ENCODE measurements at regions of chr6 and their contacts with region 1.

Region 1: DNA sequence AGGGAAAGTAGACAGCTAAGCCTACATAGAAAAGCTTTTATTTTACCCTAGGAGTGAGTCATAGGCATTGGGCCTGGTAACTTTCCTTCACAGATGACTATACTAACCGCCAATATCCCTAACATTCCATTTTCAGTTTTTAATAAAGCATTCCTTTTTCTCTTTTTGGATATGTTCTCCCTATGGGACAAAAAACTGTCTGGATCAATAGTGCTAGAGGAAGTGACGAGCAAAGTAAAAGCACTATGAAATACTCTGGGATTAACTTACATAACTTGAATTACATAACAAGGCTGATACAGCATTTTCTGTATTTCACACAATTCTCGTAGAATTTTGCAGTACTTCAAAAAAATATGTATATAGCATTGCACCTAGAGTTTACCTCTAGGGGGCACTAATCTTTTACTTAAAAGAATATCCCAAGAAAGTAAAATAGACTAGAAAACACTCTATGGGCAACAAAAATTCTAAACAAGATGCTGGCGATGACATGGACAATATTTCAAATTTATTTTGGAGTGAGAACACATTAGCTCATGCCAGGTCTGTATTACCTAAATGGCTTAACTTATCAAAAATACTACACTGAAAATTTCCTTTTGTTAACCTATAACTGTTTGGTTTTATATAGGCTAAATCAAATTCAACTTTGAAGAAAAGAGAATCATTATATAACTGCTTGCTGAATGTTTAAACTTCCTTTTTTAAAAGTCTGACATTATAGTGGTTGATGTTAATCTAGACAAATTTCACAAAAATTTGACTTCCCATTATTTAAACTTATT is 66.3 kb upstream of the DST start:
- DNase-seq: peak; percentile 59
- H3K4me3 Mint-ChIP-seq: peak overlapping the region; percentile 45
- H3K27ac Mint-ChIP-seq: peak overlapping the region; percentile 53
- H3K4me1 Mint-ChIP-seq: peaks cover 31% of the 10 kb centered on the region
- H3K27me3 Mint-ChIP-seq: no peaks in the 10 kb centered on the region
- CTCF ChIP-seq: peak; percentile 24

Region 2: GRCh38 chr6:56724455-56724854 is 15.5 kb after region 1 on chr6:
- CTCF ChIA-PET with region 1: interaction called, 14 read pairs
- POLR2A ChIA-PET with region 1: interaction called, 133 read pairs
- intact Hi-C with region 1: loop called (anchors 2 kb)
- DNase-seq: no peak
- H3K4me3 Mint-ChIP-seq: no peak overlapping the region
- H3K27ac Mint-ChIP-seq: no peak overlapping the region
- H3K4me1 Mint-ChIP-seq: peaks cover 41% of the 10 kb centered on the region
- H3K27me3 Mint-ChIP-seq: no peaks in the 10 kb centered on the region
- CTCF ChIP-seq: no peak

Region 3: DNA sequence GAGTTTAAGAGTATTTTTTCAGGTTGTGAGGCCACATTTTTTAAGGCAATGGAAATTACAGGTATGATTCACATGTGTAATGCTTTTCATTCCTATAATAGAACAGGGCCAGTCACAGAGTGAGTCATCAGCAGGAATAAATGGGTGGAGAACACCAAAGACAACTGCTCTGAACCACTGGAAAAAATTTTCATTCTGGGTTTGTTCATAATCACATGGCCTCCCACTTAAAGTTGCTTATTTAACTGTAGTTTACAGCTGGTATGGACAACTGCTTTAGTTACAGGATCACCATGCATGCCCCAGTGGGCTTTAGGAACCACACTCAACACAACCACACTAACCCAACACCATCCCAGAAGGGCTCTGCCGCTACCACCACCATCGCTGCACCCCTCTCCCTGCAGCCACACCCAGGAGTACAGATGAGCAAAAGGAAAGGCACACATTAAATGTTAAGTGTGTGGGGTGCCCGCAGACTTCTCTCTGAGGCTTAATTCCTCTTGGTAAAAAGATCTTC is 40.7 kb after region 1 on chr6:
- CTCF ChIA-PET with region 1: interaction called, 404 read pairs
- POLR2A ChIA-PET with region 1: interaction called, 192 read pairs
- intact Hi-C with region 1: no loop called
- DNase-seq: peak; percentile 88
- H3K4me3 Mint-ChIP-seq: peak overlapping the region; percentile 65
- H3K27ac Mint-ChIP-seq: peak overlapping the region; percentile 91
- H3K4me1 Mint-ChIP-seq: peaks cover 51% of the 10 kb centered on the region
- H3K27me3 Mint-ChIP-seq: no peaks in the 10 kb centered on the region
- CTCF ChIP-seq: no peak

Region 4: DNA sequence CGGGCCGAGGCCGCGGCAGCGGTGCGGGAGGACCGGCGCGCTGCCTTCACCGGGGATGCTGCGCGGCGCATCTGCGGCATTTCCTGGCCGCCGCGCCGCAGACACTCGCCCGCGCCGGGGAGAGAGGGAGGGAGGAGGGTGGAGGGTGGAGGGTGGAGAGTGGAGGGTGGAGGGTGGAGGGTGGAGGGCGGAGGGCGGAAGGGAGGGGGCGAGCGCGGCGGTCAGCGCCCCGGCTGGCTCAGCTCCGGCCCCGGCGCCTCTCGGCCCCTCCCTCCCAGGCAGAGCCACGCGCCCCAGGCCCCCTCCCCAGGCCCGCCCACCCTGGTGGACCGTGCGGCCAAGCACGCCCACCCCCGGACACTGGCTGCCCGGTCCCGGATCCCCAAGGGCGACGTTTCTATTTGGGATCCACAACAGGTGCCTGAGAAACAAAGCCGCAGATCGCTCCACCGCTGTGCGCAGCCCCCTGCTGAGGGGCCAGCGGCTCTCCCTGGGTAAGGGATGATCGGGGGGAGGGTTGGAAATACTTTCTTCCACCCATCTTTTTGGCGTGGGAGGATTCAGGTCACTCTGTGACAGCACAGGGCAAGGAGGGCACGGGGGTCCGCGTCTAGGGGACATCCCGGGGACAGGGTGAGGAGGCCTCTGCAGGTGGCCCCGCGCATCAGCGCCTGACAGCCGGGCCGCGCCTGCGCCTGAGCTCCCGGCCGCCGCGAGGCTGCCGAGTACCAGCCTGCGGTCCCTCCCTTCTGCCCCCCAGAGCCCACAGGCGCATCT is 134.8 kb after region 1 on chr6:
- CTCF ChIA-PET with region 1: interaction called, 142 read pairs
- POLR2A ChIA-PET with region 1: interaction called, 14 read pairs
- intact Hi-C with region 1: no loop called
- DNase-seq: peak; percentile 65
- H3K4me3 Mint-ChIP-seq: peak overlapping the region; percentile 92
- H3K27ac Mint-ChIP-seq: peak overlapping the region; percentile 88
- H3K4me1 Mint-ChIP-seq: peaks cover 16% of the 10 kb centered on the region
- H3K27me3 Mint-ChIP-seq: no peaks in the 10 kb centered on the region
- CTCF ChIP-seq: peak; percentile 33

Region 5: GRCh38 chr6:56955171-56956045 is 246.4 kb after region 1 on chr6:
- CTCF ChIA-PET with region 1: no interaction called
- POLR2A ChIA-PET with region 1: no interaction called
- intact Hi-C with region 1: loop called (anchors 10 kb)
- DNase-seq: peak; percentile 92
- H3K4me3 Mint-ChIP-seq: peak overlapping the region; percentile 97
- H3K27ac Mint-ChIP-seq: peak overlapping the region; percentile 29
- H3K4me1 Mint-ChIP-seq: peaks cover 13% of the 10 kb centered on the region
- H3K27me3 Mint-ChIP-seq: no peaks in the 10 kb centered on the region
- CTCF ChIP-seq: peak; percentile 77

Measured in MCF 10A (cell line).